Naive thymus-derived CD4-positive, alpha-beta T cell (primary cell): ENCODE measurements at regions of chr12 and their contacts with region 1.

Region 1: GRCh38 chr12:106747973-106748436 is 26.5 kb upstream of the RIC8B start:
- DNase-seq: peak in 7 of 9 donors; percentile 46 to 84 (median 77)
- ATAC-seq: peak; percentile 94
- H3K4me3 ChIP-seq: no peak overlapping the region
- H3K4me3 Mint-ChIP-seq: peak overlapping the region; percentile 26 to 82 (median 50)
- H3K27ac ChIP-seq: peak overlapping the region; percentile 68
- H3K27ac Mint-ChIP-seq: peak overlapping the region; percentile 82 to 98 (median 93)
- H3K4me1 ChIP-seq: peaks cover 19 to 31% of the 10 kb centered on the region in 2 donors
- H3K4me1 Mint-ChIP-seq: peaks cover 20 to 37% (median 26%) of the 10 kb centered on the region in 7 donors
- H3K27me3 ChIP-seq: no peaks in the 10 kb centered on the region
- H3K27me3 Mint-ChIP-seq: peaks cover 0 to 19% (median 5%) of the 10 kb centered on the region in 5 donors

Region 2: DNA sequence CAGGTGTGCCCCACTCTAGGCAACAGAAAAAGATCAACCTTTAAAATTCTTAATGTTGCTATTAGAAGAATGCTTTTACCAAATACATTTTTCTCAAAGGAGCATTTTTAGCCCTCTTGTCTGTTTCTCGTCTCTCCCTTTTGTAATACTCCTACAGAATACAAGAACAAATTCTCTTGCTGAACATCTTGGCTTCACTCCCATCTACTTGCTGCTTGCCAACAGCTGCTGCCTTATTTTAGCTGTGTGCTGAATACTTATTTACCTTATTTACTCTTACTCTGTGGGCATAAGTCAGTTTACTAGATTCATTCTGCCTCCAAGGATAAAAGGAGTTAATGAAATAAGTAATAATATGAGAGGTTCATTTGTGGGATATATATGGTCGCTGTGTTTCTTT is 319.6 kb before region 1 on chr12:
- CTCF ChIA-PET with region 1: no interaction called
- POLR2A ChIA-PET with region 1: no interaction called
- intact Hi-C with region 1: no loop called
- DNase-seq: no peak
- ATAC-seq: no peak
- H3K4me3 ChIP-seq: no peak overlapping the region
- H3K4me3 Mint-ChIP-seq: no peak overlapping the region
- H3K27ac ChIP-seq: no peak overlapping the region
- H3K27ac Mint-ChIP-seq: peak overlapping the region in 1 of 9 donors; percentile 8
- H3K4me1 ChIP-seq: no peaks in the 10 kb centered on the region
- H3K4me1 Mint-ChIP-seq: no peaks in the 10 kb centered on the region
- H3K27me3 ChIP-seq: no peaks in the 10 kb centered on the region
- H3K27me3 Mint-ChIP-seq: no peaks in the 10 kb centered on the region

Region 3: DNA sequence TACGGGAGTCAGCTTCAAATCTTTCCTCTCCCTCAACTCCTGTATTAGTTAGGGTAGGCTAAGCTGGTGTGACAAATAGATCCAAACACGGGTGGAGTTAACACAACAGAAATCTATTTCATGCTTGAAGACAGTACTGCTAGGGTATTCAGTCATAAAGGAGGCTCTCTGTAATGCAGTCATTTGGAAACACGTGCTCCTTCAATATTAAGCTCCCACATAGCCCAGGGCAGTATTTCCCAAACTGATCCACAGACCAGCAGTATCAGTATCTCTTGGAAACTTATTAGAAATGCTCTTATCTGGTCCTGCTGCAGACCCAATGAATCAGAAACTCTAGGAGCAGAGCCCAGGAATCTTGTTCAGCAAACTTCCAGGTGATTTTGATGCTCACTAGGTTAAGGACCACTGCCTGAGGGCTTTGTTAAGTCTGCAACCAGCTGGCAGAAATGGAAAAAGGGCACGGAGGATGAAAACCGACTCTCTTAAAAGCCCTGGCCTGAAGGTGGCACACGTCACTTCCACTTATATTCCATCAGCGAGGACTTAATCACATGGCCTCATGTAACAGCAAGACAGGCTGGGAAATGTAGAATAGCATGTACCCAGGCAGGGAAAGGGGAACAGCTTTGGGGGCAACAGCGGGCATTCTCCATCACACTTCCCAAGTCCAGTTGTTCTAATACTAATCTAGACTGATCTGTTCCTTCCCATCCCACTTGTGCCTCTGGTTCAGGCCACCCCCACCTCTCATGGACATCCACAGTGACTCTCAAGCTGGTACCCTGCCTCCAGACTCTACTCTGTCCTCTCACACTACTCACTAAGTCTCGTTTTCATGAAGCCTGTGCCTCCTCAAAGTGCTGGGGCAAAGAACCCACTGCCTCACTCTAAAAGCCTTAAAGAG is 11.7 kb before region 1 on chr12:
- CTCF ChIA-PET with region 1: interaction called, 5 read pairs
- POLR2A ChIA-PET with region 1: interaction called, 11 read pairs
- intact Hi-C with region 1: no loop called
- DNase-seq: peak in 7 of 9 donors; percentile 18 to 41 (median 32)
- ATAC-seq: peak; percentile 67
- H3K4me3 ChIP-seq: no peak overlapping the region
- H3K4me3 Mint-ChIP-seq: no peak overlapping the region
- H3K27ac ChIP-seq: no peak overlapping the region
- H3K27ac Mint-ChIP-seq: peak overlapping the region in 1 of 9 donors; percentile 4
- H3K4me1 ChIP-seq: no peaks in the 10 kb centered on the region
- H3K4me1 Mint-ChIP-seq: peaks cover 0 to 8% (median 5%) of the 10 kb centered on the region in 7 donors
- H3K27me3 ChIP-seq: no peaks in the 10 kb centered on the region
- H3K27me3 Mint-ChIP-seq: peaks cover 0 to 18% (median 0%) of the 10 kb centered on the region in 5 donors

Region 4: DNA sequence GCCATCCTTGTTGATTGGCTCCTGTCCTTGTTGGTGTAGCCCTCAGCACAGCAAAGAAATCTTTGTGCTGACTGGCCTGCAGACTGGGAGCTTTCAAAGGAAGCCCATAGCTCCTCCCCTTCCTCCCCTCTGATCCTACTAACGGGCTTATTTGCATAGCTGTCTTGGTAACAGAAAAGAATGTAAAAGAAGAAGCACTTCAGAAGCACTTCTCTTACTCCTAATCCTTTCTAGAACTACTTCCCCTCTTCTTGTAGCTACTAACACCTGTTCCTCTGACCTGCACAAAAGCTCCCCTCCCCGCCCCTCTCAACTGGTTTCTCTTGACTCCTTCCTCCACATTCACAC is 12.2 kb after region 1 on chr12:
- CTCF ChIA-PET with region 1: no interaction called
- POLR2A ChIA-PET with region 1: interaction called, 13 read pairs
- intact Hi-C with region 1: loop called in 1 of 2 experiments (anchors 1 kb)
- DNase-seq: peak in 7 of 9 donors; percentile 35 to 50 (median 45)
- ATAC-seq: peak; percentile 91
- H3K4me3 ChIP-seq: peak overlapping the region; percentile 8
- H3K4me3 Mint-ChIP-seq: peak overlapping the region; percentile 62 to 87 (median 80)
- H3K27ac ChIP-seq: peak overlapping the region; percentile 65
- H3K27ac Mint-ChIP-seq: peak overlapping the region; percentile 81 to 98 (median 93)
- H3K4me1 ChIP-seq: peaks cover 15 to 22% of the 10 kb centered on the region in 2 donors
- H3K4me1 Mint-ChIP-seq: peaks cover 9 to 33% (median 25%) of the 10 kb centered on the region in 7 donors
- H3K27me3 ChIP-seq: no peaks in the 10 kb centered on the region
- H3K27me3 Mint-ChIP-seq: no peaks in the 10 kb centered on the region